Transverse colon (tissue), 4 donors: ENCODE measurements at regions of chr12 and their contacts with region 1.

Region 1: DNA sequence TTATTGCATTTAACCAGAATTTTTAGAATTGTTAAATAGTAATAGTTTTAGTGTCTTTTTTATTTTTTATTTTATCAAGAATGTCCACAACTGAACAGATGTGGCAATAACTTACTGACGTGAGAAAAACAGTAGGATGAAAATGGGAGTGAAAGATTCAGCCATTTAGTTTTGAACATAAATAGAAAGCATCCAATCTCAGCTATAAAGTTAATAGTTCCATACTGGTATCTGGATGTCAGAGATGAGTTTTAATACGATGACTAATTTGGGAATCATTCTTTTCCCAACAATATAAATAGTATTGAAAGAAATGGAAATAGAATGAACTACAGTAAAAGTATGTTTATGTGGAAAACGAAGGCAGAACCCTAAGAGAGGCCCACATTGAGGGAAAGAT is 159.4 kb downstream of the EPS8 start:
- DNase-seq: no peak
- H3K4me3 ChIP-seq: no peak overlapping the region
- H3K27ac ChIP-seq: peak overlapping the region; percentile 74 to 78 (median 76)
- H3K4me1 ChIP-seq: peaks cover 4 to 33% (median 16%) of the 10 kb centered on the region in 4 donors
- H3K27me3 ChIP-seq: no peaks in the 10 kb centered on the region
- CTCF ChIP-seq: no peak
- EP300 ChIP-seq: no peak
- POLR2A ChIP-seq: no peak

Region 2: DNA sequence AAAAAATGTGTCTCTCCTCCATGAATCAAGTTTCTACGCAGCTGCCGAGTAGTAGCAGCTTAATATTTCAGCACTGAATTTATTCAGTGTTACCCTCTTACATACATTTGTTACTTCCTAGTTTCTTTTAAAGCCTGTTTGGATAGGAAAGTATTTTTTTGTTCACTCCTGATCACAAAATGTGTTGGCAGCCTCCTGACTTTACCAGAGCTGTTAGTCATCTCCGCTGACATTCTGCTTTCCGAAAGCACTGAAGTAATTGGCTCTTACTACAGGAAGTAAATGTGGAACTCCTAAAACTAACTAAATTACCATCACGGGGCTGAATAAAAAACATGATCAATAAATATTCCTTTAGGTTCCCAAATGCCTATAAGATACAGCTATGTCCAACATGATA is 66.1 kb before region 1 on chr12:
- in situ Hi-C with region 1: no loop called
- intact Hi-C with region 1: no loop called
- DNase-seq: no peak
- H3K4me3 ChIP-seq: peak overlapping the region in 1 of 4 donors; percentile 21
- H3K27ac ChIP-seq: peak overlapping the region; percentile 18 to 58 (median 28)
- H3K4me1 ChIP-seq: peaks cover 0 to 20% (median 3%) of the 10 kb centered on the region in 4 donors
- H3K27me3 ChIP-seq: no peaks in the 10 kb centered on the region
- CTCF ChIP-seq: no peak
- EP300 ChIP-seq: no peak
- POLR2A ChIP-seq: no peak

Region 3: DNA sequence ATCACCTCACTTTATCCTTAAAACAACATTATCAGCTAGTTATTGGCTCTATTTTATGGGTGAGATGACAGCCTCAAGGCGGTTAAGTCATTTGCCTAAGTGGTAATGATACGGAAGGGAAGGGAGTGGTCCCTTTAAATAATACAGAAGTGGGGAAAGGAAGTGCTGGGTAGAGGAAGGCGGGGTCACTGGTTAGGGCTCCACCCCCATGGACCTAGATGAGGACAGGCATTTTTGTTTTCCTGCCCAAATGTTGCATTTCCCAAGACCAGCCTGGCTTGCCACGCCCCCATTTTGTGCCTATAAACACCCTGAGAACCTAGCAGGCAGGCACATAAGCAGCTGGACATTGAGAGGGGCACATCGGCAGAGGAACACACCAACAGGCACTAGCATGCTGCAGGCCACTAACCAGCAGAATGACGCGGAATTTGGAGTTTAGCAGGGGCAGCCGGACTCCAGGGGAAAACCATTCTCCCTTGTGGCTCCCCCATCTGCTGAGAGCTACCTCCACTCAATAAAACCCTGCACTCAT is 58.5 kb after region 1 on chr12:
- in situ Hi-C with region 1: no loop called
- intact Hi-C with region 1: loop called (anchors 10 kb)
- DNase-seq: peak; percentile 61
- H3K4me3 ChIP-seq: peak overlapping the region in 1 of 4 donors; percentile 9
- H3K27ac ChIP-seq: peak overlapping the region; percentile 70 to 78 (median 75)
- H3K4me1 ChIP-seq: peaks cover 19 to 65% (median 57%) of the 10 kb centered on the region in 4 donors
- H3K27me3 ChIP-seq: no peaks in the 10 kb centered on the region
- CTCF ChIP-seq: no peak
- EP300 ChIP-seq: no peak
- POLR2A ChIP-seq: peak; percentile 44